Mammary epithelial cell (primary cell): ENCODE measurements at regions of chr5 and their contacts with region 1.

Region 1: GRCh38 chr5:152470167-152470566 is 65.1 kb upstream of the NMUR2 start:
- DNase-seq: no peak
- H3K4me3 ChIP-seq: no peak overlapping the region
- H3K27ac ChIP-seq: no peak overlapping the region
- H3K4me1 ChIP-seq: no peaks in the 10 kb centered on the region
- H3K27me3 ChIP-seq: peaks cover 1% of the 10 kb centered on the region
- CTCF ChIP-seq: no peak

Region 2: DNA sequence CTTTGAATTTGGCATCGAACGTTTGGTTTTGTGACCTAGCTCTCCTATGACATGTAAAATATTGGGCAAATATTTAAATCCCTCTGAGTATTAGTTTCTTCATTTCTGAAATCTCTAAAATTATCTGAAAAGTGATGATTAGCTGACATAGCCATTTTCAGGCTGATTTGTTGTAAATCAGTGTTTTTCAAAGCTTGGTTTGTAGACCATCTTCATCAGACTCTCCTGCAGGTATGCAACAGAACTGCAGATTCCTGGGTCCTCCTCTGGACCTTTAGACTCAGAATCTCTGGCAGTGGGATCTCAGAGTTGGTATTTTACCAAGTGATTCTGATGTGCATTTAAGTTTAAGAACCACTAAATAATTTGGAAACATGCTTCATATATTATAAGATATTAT is 26.2 kb before region 1 on chr5:
- CTCF ChIA-PET with region 1: no interaction called
- dilution Hi-C with region 1: no loop called
- in situ Hi-C with region 1: no loop called
- intact Hi-C with region 1: loop called (anchors 1 kb)
- DNase-seq: no peak
- H3K4me3 ChIP-seq: no peak overlapping the region
- H3K27ac ChIP-seq: no peak overlapping the region
- H3K4me1 ChIP-seq: no peaks in the 10 kb centered on the region
- H3K27me3 ChIP-seq: no peaks in the 10 kb centered on the region
- CTCF ChIP-seq: no peak